ENCODE measurements at regions of chr21 and their contacts with region 1.

Region 1: DNA sequence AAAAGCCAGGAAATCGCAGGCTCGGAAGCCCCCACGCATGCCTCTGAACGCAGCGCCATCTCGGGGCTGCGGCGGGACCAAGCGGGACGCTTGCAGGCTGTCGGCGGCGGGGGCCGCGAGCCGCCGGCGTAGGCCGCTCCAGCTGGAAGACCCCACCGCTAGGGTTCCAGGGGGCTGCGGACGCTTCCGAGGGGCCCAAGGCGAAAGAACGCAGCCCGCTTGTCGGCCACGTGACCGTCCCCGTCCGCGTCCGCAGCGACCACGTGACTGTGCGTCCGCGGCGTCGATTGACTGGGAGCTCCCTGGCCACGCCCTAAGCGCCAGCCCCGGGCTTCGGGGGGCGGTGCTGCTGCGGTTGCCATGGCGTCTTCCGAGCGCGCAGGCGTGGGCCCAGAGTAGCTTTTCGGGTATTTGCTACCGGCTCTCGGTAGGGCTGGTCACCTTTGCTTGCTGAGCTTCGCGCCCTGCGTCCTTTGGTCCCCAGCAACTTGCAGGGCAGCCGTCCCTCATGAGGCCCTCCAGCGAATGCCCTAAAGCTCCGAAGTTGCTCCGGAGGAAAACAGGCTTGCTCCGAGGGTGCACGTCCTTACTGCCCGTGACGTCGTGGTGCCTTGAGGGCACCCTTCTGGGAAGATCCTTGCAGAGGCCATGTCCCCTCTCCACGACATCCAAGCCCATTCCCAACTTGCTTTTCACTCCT is 197.2 kb downstream of the DYRK1A start:
- DNase-seq: peak; percentile 66 to 93
- ATAC-seq: peak; percentile 81 to 91
- H3K4me3 ChIP-seq: peak overlapping the region; percentile 61
- H3K27ac ChIP-seq: peak overlapping the region; percentile 96 to 98
- H3K4me1 ChIP-seq: peaks cover 21% of the 10 kb centered on the region
- CTCF ChIP-seq: 0 out of 3 replicates have a peak, but pooled peaks have one; percentile 20
- EP300 ChIP-seq: no peak
- POLR2A ChIP-seq: peak; percentile 76
- RAD21 ChIP-seq: peak in 1 of 2 experiments; percentile 21; a peak in 1 of 5 replicates

Region 2: DNA sequence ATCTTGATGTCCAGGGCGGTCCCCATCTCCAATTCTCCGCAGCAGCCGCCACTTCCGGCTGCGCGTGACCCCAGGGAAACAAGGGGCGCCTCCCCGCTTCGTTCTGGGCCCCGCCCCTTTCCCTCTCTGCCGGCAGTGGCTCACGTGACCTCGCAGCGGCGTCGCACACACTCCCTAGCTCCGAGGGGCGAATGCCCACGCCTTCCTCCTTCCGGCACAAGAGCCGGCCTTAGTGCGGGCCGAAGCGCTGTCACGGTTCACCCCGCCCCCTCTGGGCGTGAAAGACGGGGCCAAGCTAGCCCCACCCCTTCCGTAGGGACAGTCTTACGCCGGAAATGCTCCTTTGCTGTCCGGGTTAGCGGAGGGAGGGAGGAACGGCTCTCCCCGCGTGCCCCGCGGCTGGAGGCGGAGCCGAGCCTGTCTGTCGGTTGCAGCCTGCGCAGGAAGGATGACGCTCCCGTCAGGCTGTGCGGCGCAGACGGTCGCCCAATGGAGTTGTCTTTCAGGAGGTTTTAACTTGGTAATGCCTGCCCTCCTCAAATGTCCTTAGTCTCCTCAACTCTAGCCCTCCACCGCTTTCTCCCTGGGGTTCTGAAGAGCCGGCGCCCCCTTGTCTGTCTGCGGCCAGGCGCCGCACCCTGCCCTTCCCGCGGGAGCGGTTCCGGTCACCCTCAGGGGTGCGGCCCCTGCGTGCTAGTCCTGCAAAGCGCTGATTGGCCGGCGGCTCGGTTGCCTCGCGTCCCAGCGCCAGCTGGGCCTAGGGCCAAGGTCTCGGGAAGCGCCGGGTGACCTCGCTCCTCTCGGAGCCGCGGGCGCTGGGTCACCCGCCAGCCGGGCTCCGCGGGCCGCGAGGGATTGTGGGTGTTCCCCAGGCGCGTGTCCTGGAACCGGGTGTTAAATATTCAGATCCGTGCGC is 296.3 kb before region 1 on chr21 and contains the start of gene VPS26C:
- CTCF ChIA-PET with region 1: no interaction called
- POLR2A ChIA-PET with region 1: interaction called, 14 read pairs
- DNase-seq: peak; percentile 58 to 98
- ATAC-seq: peak; percentile 95
- H3K4me3 ChIP-seq: peak within 1 kb of the TSS; percentile 69
- H3K27ac ChIP-seq: peak within 1 kb of the TSS; percentile 91 to 96
- H3K4me1 ChIP-seq: peaks cover 8% of the 10 kb centered on the region; the same call in 1 of the 3 replicates
- CTCF ChIP-seq: no peak
- EP300 ChIP-seq: no peak
- POLR2A ChIP-seq: peak; percentile 45; the same call in 1 of the 2 replicates
- RAD21 ChIP-seq: no peak; a peak in 1 of 5 replicates
- polyA plus RNA-seq, gene VPS26C: 29.5 and 32.0 TPM in 2 replicates

Region 3: DNA sequence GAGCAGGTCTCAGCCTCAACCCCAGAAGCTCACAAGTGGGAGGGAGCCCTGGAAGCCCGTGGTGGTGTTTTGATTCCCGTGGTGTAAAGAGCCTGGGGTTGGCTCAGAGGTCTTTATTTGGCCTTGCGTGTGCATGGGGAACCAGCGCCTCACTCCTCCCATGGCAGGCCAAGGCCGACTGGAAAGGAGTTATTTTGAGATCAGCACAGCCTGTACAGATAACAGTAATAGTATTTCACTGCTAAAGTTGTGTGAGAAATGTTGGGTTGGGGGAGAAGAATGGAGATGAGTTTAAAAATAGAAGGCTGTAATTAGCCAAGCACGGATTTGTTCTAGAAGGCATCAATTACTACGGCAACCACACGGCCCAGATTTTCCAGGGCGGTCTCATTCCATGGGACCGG is 10.7 kb before region 1 on chr21:
- CTCF ChIA-PET with region 1: interaction called, 13 read pairs
- POLR2A ChIA-PET with region 1: interaction called, 18 read pairs
- DNase-seq: no peak
- ATAC-seq: no peak
- H3K4me3 ChIP-seq: no peak overlapping the region
- H3K27ac ChIP-seq: no peak overlapping the region
- H3K4me1 ChIP-seq: peaks cover 6% of the 10 kb centered on the region
- CTCF ChIP-seq: no peak
- EP300 ChIP-seq: no peak
- POLR2A ChIP-seq: no peak
- RAD21 ChIP-seq: no peak

Region 4: DNA sequence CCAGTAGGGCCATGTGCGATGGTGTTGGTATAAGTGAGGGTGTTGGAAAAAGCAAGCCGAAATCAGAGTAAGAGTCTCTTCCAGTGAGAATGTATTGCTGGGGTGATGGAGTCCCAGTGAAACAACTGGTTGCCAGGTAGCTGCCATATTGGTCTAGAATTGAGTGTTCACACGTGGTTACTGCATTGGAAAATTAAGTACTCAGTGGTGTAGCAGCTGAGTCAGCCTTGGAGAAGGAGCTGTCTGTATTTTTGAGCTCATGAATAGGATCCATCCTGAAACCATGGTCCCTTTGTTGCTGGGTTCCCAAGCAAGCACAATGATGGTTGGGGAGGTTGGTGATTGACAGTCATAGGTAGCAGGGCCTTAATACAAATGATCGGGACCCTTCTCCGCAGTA is 38.1 kb after region 1 on chr21:
- CTCF ChIA-PET with region 1: no interaction called
- POLR2A ChIA-PET with region 1: no interaction called
- DNase-seq: no peak
- ATAC-seq: no peak
- H3K4me3 ChIP-seq: no peak overlapping the region
- H3K27ac ChIP-seq: no peak overlapping the region
- H3K4me1 ChIP-seq: no peaks in the 10 kb centered on the region
- CTCF ChIP-seq: no peak
- EP300 ChIP-seq: no peak
- POLR2A ChIP-seq: no peak
- RAD21 ChIP-seq: no peak

Region 5: DNA sequence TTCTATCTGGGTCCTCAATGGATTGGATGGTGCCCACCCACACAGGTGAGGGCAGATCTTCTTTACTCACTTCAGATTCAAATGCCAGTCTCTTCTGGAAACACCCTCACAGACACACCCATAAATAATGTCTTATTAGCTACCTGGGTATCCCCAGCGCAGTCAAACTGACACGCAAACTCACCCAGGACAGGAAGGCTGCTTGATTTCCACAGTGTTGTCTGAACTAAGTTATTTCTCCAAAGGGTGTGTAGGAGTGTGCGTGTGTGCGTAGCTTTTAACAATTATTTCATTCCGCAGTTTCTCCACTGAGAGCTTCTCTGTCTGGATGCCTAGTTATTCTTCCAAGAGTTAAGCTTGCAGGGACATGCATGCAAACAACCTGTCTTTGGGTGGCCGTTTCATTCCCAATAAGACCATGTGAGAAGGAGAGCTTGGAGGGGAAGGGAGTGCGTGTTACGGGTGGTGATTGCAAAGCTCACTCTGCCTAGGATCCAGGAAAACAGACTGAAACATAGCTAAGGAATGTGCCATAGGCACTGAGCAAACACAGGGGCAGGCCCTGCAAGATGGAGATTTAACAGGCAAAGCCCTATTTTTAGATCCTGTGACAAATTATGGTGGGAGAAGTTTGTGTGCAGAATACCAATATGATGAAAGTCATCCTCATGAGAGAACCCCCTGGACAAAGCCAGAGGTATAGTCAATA is 72.5 kb after region 1 on chr21:
- CTCF ChIA-PET with region 1: interaction called, 6 read pairs
- POLR2A ChIA-PET with region 1: interaction called, 12 read pairs
- DNase-seq: peak; percentile 49 to 68
- ATAC-seq: peak; percentile 98 to 99
- H3K4me3 ChIP-seq: no peak overlapping the region
- H3K27ac ChIP-seq: peak overlapping the region; percentile 70 to 80
- H3K4me1 ChIP-seq: peaks cover 26% of the 10 kb centered on the region
- CTCF ChIP-seq: no peak
- EP300 ChIP-seq: no peak
- POLR2A ChIP-seq: no peak
- RAD21 ChIP-seq: no peak

Region 6: DNA sequence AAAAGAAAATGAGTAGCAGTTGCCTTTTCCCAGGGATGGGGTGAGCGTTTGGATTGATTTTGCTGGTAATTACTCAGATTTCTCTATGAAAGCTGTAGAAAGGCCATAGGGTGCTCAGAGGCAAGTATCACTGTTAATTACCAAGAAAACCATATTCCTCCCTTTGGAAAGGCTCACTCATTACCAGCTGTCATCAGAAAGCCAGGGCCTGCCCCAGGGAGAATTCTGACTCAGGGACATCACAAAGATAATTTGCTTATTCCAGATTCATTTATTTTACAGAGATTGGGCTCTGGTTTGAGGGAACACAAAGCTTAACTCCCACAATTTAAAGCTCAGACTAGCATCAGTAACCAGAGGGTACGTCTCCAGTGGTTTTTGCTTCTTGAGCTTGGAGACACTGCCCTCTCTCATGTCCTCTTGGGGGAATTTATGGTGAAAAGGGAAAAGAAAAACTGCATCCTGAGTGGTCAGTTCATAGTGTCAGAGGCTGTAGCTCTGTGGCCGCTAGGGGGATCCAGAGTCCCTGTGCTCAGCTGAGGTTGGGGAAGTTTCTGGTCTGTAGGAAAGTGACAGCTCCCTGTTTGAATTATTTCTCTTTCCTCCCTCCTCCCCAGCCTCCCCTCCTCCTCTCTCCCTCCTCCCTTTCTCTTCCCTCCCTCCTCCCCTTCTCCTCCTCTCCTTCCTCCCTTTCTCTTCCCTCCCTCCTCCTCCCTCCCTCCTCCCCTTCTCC is 148.2 kb after region 1 on chr21:
- CTCF ChIA-PET with region 1: interaction called, 4 read pairs
- POLR2A ChIA-PET with region 1: interaction called, 11 read pairs
- DNase-seq: peak; percentile 27 to 74
- ATAC-seq: peak; percentile 93 to 96
- H3K4me3 ChIP-seq: no peak overlapping the region
- H3K27ac ChIP-seq: peak overlapping the region; percentile 52 to 60
- H3K4me1 ChIP-seq: peaks cover 9% of the 10 kb centered on the region
- CTCF ChIP-seq: peak; percentile 71
- EP300 ChIP-seq: no peak
- POLR2A ChIP-seq: no peak
- RAD21 ChIP-seq: peak; percentile 80 to 83